ENCODE measurements at regions of chr16 and their contacts with region 1.

Region 1: GRCh38 chr16:3654249-3654991 is at the start of gene DNASE1:
- DNase-seq: peak; percentile 88
- CTCF ChIP-seq: peak; percentile 80

Region 2: DNA sequence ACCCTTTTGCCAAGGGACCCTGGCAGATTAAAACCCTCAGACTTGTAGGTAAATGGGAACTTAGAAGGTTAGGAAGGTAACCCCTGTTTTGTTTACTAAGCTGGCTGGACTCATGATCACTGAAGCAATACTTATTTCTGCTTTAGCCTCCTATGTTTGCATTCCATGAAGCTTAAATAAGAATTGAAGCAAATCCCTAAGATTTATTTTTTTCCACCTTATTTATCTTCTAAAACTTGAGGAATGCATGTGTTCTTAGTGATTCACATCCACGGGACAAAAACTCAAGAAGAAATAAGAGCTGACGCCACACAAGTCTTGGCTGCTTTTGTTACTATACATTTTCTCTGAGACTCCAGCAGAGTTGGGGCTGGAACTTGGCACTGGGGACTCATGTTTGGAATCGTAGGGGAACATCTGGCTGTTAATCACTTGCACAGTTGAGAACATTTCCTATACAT is 118.1 kb before region 1 on chr16:
- in situ Hi-C with region 1: loop called (anchors 25 kb)
- DNase-seq: no peak
- CTCF ChIP-seq: no peak

Region 3: DNA sequence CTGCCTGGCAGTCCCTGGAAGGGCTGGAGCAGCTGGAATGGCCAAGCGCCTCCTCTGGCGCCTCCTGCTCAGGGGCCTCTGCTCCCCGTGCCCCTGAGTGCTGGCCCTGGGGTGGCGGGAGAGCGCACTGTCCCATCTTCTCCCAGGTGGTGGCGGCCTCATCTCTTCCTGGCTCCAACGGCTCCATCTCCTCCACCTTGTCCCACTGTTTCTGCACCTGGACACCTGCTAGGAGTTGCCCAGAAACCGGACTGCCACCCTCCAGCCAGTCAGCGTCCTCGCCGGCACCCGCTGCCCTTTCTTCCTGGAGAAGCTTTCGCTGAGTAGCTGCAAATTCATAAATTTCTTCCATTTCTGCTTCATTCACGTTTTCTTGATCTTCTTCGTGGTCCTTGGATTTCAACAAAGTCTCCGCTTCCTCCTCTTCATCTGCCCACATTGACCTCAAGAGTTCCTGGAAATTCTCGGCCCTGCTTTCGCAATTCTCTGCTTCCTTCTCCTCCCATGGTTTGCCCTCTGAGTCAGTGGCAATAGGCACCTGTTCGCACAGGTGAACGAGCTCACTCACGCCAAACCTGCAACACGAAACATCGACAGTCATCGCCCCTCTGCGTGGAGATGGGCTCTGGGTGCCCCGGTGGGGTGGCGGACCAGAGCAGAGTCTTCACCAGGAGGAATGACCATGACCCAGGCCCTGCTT is 63.5 kb before region 1 on chr16:
- in situ Hi-C with region 1: loop called (anchors 10 kb)
- DNase-seq: no peak
- CTCF ChIP-seq: no peak